ENCODE measurements at regions of chrX and their contacts with region 1.

Region 1: GRCh38 chrX:123833387-123833786 is 26.5 kb upstream of the XIAP start:
- DNase-seq: peak in 1 of 2 donors; percentile 20
- ATAC-seq: peak; percentile 44 to 85 (median 78)
- H3K4me3 ChIP-seq: no peak overlapping the region
- H3K27ac ChIP-seq: no peak overlapping the region
- H3K4me1 ChIP-seq: no peaks in the 10 kb centered on the region
- H3K27me3 ChIP-seq: peaks cover 0 to 6% (median 0%) of the 10 kb centered on the region in 7 donors
- CTCF ChIP-seq: peak; percentile 46 to 84 (median 72)

Region 2: GRCh38 chrX:123884809-123885408 is 51.5 kb after region 1 on chrX:
- intact Hi-C with region 1: loop called in 2 of 10 experiments (anchors 2 to 5 kb)
- DNase-seq: peak in 1 of 2 donors; percentile 8
- ATAC-seq: no peak
- H3K4me3 ChIP-seq: no peak overlapping the region
- H3K27ac ChIP-seq: no peak overlapping the region
- H3K4me1 ChIP-seq: no peaks in the 10 kb centered on the region
- H3K27me3 ChIP-seq: no peaks in the 10 kb centered on the region
- CTCF ChIP-seq: peak in 8 of 9 donors; percentile 24 to 67 (median 55)

Region 3: DNA sequence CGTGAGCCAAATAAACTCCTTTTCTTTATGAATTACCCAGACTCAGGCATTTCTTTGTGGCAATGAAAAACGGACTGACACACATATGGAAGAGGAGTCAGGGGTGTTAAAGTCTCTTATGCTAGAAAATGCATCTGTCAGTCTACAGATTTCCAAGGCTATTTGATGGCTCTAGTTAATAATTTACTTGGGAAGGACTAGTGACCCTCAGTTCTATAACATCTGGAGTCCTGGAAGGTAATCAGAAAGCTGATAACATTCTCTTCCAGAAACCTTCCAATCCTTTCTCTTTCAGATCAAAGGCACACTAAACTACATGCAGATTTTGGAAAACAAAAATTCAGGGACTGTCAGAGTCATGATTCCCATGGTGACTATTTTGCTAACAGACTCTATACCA is 357.1 kb after region 1 on chrX:
- intact Hi-C with region 1: no loop called
- DNase-seq: no peak
- ATAC-seq: no peak
- H3K4me3 ChIP-seq: no peak overlapping the region
- H3K27ac ChIP-seq: no peak overlapping the region
- H3K4me1 ChIP-seq: peaks cover 0 to 15% (median 0%) of the 10 kb centered on the region in 9 donors
- H3K27me3 ChIP-seq: no peaks in the 10 kb centered on the region
- CTCF ChIP-seq: no peak